K562 (cell line): ENCODE measurements at regions of chr22 and their contacts with region 1.

Region 1: DNA sequence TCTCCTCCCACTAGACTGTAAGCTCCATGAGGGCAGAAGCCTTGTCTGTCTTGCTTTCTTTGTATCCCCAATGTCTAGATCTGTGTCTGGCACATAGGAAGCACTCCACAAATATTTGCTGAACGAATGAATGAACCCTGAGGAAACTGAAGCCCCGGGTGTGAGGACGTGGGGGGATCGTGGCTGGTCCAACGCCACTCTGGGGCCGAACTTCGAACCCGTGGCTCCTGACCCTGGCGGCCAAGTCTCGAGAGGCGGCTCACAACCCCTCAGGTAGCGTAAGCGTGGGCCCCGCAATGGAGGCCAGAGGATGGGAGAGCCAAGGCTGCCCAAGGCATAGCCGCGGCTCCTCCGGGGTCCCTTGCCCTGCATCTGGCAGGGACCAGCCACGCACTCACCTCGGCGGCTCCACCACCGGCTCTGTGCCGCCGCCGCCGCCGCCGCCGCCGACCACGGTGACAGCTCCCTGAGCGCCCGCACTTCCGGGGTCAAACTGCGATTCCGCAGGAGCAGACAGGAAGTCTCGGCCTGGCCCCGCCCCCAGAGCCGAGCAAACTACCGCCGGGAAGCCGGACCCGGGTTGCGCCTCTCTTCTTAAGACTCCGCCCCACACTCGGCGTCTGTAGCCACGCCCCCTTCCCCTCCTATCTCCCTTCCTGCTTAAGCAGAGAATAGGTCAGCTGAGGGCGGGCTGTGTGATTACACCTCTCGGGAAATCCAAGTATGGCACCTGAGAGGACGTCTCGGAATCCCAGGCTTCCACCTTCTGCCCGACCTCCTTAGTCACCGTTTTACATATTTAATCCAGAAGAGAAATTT is at the start of gene ASCC2:
- DNase-seq: peak; percentile 94 to 97 (median 96)
- ATAC-seq: peak; percentile 98
- H3K4me3 ChIP-seq: peak within 1 kb of the TSS; percentile 93
- H3K27ac ChIP-seq: peak within 1 kb of the TSS; percentile 84
- H3K4me1 ChIP-seq: peaks cover 10 to 18% of the 10 kb centered on the region in 2 experiments; a peak in 4 of 5 replicates
- H3K27me3 ChIP-seq: no peaks in the 10 kb centered on the region
- CTCF ChIP-seq: no peak
- EP300 ChIP-seq: no peak
- POLR2A ChIP-seq: peak; percentile 86
- RAD21 ChIP-seq: no peak
- polyA plus RNA-seq, gene ASCC2: 4.0 TPM

Region 2: GRCh38 chr22:29820961-29821789 is 16.8 kb before region 1 on chr22:
- CTCF ChIA-PET with region 1: no interaction called
- POLR2A ChIA-PET with region 1: interaction called, 3 read pairs
- in situ Hi-C with region 1: no loop called
- intact Hi-C with region 1: loop called (anchors 1 kb)
- DNase-seq: peak; percentile 67 to 95 (median 78)
- ATAC-seq: peak; percentile 97
- H3K4me3 ChIP-seq: no peak overlapping the region
- H3K27ac ChIP-seq: peak overlapping the region; percentile 6; the same call in 2 of the 3 replicates
- H3K4me1 ChIP-seq: peaks cover 4 to 12% of the 10 kb centered on the region in 2 experiments; a peak in 3 of 5 replicates
- H3K27me3 ChIP-seq: no peaks in the 10 kb centered on the region
- CTCF ChIP-seq: 0 out of 6 replicates have a peak, but pooled peaks of 1 of the 3 experiments have one; percentile 21
- EP300 ChIP-seq: peak; percentile 82
- POLR2A ChIP-seq: no peak
- RAD21 ChIP-seq: peak in 1 of 2 experiments; percentile 54; a peak in 2 of 4 replicates